ENCODE measurements at regions of chr13 and their contacts with region 1.

Region 1: DNA sequence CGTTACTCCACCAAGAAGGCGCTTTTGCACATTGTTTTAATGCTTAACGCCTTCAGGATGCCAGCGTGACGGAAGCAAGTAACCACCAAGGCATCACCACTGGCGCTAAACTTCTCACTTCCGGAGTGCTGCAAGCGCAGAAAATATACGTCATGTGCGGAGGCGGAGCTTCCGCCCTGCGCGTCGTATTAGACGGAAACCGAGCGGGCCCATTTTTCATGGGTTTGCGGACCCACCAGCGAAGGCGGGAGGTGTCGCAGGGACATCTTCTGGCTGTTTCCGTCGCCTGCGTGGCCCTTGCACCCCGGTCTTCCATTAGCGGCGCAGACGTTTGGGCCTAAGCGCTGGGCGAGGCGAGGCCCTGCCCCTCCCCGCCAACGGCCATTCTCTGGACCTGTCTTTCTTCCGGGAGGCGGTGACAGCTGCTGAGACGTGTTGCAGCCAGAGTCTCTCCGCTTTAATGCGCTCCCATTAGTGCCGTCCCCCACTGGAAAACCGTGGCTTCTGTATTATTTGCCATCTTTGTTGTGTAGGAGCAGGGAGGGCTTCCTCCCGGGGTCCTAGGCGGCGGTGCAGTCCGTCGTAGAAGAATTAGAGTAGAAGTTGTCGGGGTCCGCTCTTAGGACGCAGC is at the start of gene ERCC5:
- DNase-seq: peak; percentile 94
- H3K4me3 ChIP-seq: peak within 1 kb of the TSS; percentile 75 to 97 (median 87)
- H3K27ac ChIP-seq: peak within 1 kb of the TSS; percentile 78
- H3K4me1 ChIP-seq: peaks cover 7% of the 10 kb centered on the region
- H3K27me3 ChIP-seq: no peaks in the 10 kb centered on the region
- CTCF ChIP-seq: no peak
- POLR2A ChIP-seq: peak; percentile 91
- total RNA-seq, gene ERCC5: 36.0 and 40.1 TPM in 2 replicates

Region 2: GRCh38 chr13:101726681-101727080 is 1119.1 kb before region 1 on chr13:
- CTCF ChIA-PET with region 1: no interaction called
- POLR2A ChIA-PET with region 1: no interaction called
- dilution Hi-C with region 1: no loop called
- intact Hi-C with region 1: no loop called
- DNase-seq: no peak
- H3K4me3 ChIP-seq: no peak overlapping the region
- H3K27ac ChIP-seq: no peak overlapping the region
- H3K4me1 ChIP-seq: no peaks in the 10 kb centered on the region
- H3K27me3 ChIP-seq: no peaks in the 10 kb centered on the region
- CTCF ChIP-seq: no peak
- POLR2A ChIP-seq: no peak

Region 3: DNA sequence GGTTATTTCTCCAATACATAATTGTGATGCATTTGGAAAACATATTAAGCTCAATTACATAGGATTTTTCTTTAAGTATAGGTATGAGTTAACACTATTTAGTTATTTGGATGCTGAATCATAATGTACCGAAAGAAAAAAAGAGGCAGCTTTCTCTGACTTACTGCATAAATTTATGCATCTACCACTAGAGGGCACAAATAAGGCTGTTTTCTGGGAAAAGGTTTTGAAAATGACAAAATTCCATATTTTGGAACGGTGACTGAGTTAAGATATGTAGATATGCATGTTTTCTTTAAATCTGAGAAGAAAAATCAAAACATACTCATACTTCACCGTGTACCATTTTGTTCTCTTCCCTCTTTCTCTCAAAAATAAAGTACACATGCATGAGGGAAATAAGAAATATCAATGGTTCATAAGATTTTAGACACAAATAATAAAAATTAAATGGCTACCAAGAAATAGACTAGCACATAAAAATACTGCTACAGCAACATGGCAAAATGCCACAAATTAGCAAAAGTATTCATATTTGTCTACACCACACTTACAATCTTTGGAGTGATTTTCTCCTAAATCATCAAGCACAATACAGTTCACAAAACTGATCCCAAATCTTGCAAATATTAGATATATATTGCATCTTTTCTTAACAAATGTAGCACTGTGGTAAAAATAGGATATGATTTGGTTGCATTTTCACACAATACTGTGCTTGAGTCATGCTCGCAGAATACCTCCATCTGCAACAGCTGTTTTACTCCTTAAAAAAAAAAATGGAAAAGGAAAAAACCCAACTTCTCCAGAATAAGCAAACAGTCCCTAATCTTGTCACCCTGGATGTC is 703.9 kb before region 1 on chr13:
- CTCF ChIA-PET with region 1: no interaction called
- POLR2A ChIA-PET with region 1: no interaction called
- dilution Hi-C with region 1: no loop called
- intact Hi-C with region 1: loop called (anchors 1 kb)
- DNase-seq: peak; percentile 25
- H3K4me3 ChIP-seq: no peak overlapping the region
- H3K27ac ChIP-seq: no peak overlapping the region
- H3K4me1 ChIP-seq: no peaks in the 10 kb centered on the region
- H3K27me3 ChIP-seq: peaks cover 0 to 2% of the 10 kb centered on the region in 2 experiments
- CTCF ChIP-seq: peak; percentile 48 to 51
- POLR2A ChIP-seq: no peak

Region 4: GRCh38 chr13:102460801-102461200 is 384.9 kb before region 1 on chr13:
- CTCF ChIA-PET with region 1: no interaction called
- POLR2A ChIA-PET with region 1: no interaction called
- dilution Hi-C with region 1: no loop called
- intact Hi-C with region 1: loop called (anchors 5 kb)
- DNase-seq: no peak
- H3K4me3 ChIP-seq: no peak overlapping the region
- H3K27ac ChIP-seq: no peak overlapping the region
- H3K4me1 ChIP-seq: no peaks in the 10 kb centered on the region
- H3K27me3 ChIP-seq: no peaks in the 10 kb centered on the region
- CTCF ChIP-seq: no peak
- POLR2A ChIP-seq: no peak

Region 5: GRCh38 chr13:102651892-102652291 is 193.9 kb before region 1 on chr13:
- CTCF ChIA-PET with region 1: no interaction called
- POLR2A ChIA-PET with region 1: no interaction called
- dilution Hi-C with region 1: no loop called
- intact Hi-C with region 1: loop called (anchors 5 kb)
- DNase-seq: no peak
- H3K4me3 ChIP-seq: no peak overlapping the region
- H3K27ac ChIP-seq: no peak overlapping the region
- H3K4me1 ChIP-seq: peaks cover 21% of the 10 kb centered on the region
- H3K27me3 ChIP-seq: no peaks in the 10 kb centered on the region
- CTCF ChIP-seq: no peak
- POLR2A ChIP-seq: no peak

Region 6: DNA sequence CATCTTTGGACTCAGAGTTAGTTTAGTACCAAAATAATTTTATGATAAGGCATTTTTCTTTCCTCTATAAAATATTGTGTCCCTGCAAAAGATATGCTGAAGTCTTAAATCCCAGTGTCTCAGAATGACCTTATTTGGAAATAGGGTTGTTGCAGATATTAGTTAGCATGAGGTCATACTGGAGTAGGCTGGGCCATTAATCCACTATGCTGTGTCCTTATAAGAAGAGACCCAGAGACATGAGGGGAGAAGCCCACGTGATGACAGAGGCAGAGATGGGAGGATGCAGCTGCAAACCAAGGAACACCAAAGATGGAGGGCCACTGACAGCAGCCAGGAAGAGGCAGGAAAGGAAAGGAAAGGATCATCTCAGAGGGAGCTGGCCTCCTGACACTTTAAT is 53.3 kb before region 1 on chr13:
- CTCF ChIA-PET with region 1: no interaction called
- POLR2A ChIA-PET with region 1: no interaction called
- dilution Hi-C with region 1: no loop called
- intact Hi-C with region 1: loop called (anchors 1 kb)
- DNase-seq: no peak
- H3K4me3 ChIP-seq: no peak overlapping the region
- H3K27ac ChIP-seq: no peak overlapping the region
- H3K4me1 ChIP-seq: peaks cover 2% of the 10 kb centered on the region
- H3K27me3 ChIP-seq: no peaks in the 10 kb centered on the region
- CTCF ChIP-seq: no peak
- POLR2A ChIP-seq: no peak

Region 7: DNA sequence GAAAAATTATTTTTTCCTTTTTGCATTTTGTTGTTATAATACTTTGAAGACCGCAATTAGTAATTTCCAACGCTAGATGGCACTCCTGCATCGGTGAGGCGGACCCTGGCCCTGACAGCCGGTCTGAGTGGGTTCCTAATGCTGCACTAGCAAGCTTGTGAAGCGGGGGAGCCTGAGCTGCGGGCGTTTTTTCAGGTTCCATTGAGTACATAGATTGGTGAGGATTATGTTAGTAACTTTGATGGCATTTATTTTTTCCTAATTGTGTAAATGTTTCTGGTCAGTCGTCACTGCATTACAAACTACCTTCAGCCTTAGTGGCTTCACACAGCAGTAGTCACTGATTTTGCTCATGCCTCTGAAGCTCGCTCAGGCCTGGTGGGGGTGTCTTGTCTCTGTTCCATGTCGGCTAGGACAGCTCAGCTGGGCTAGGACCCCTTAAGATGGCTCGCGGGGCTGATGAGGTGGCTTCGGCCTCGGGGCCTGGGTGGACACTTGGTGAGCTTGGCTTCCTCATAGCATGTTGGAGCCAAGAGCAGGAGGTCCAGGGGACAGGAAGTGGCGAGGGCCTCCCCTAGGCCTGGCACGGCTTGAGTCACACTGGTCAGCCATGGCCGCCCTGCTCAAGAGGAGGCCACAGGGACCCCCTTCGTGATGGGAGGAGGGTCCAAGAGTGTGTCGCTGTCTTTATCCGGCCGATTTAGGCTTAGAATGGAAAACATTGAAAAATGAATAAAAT is 25.1 kb after region 1 on chr13:
- CTCF ChIA-PET with region 1: interaction called, 11 read pairs
- POLR2A ChIA-PET with region 1: no interaction called
- dilution Hi-C with region 1: no loop called
- intact Hi-C with region 1: no loop called
- DNase-seq: peak; percentile 55
- H3K4me3 ChIP-seq: no peak overlapping the region
- H3K27ac ChIP-seq: no peak overlapping the region
- H3K4me1 ChIP-seq: peaks cover 7% of the 10 kb centered on the region
- H3K27me3 ChIP-seq: no peaks in the 10 kb centered on the region
- CTCF ChIP-seq: peak; percentile 65 to 80
- POLR2A ChIP-seq: no peak